Dorsolateral prefrontal cortex (tissue), 120 donors: ENCODE measurements at regions of chr15 and their contacts with region 1.

Region 1: GRCh38 chr15:43791993-43792760 is at the start of gene SERF2:
- DNase-seq: peak; percentile 100
- H3K4me3 ChIP-seq: peak within 1 kb of the TSS; percentile 63 to 100 (median 95)
- H3K27ac ChIP-seq: peak within 1 kb of the TSS; percentile 76 to 98 (median 92)
- H3K27me3 ChIP-seq: no peaks in the 10 kb centered on the region
- CTCF ChIP-seq: peak in 15 of 56 donors; percentile 0 to 41 (median 22)
- total RNA-seq, gene SERF2: 187 to 396 (median 280) TPM

Region 2: GRCh38 chr15:43241100-43241499 is 551.1 kb before region 1 on chr15:
- intact Hi-C with region 1: no loop called
- DNase-seq: no peak
- H3K4me3 ChIP-seq: no peak overlapping the region
- H3K27ac ChIP-seq: no peak overlapping the region
- H3K27me3 ChIP-seq: no peaks in the 10 kb centered on the region
- CTCF ChIP-seq: no peak

Region 3: GRCh38 chr15:43749690-43750345 is 42.4 kb before region 1 on chr15:
- intact Hi-C with region 1: loop called in 1 of 2 experiments (anchors 5 kb)
- DNase-seq: no peak
- H3K4me3 ChIP-seq: peak overlapping the region in 36 of 59 donors; percentile 3 to 49 (median 22)
- H3K27ac ChIP-seq: peak overlapping the region in 12 of 59 donors; percentile 2 to 49 (median 27)
- H3K27me3 ChIP-seq: no peaks in the 10 kb centered on the region
- CTCF ChIP-seq: no peak

Region 4: DNA sequence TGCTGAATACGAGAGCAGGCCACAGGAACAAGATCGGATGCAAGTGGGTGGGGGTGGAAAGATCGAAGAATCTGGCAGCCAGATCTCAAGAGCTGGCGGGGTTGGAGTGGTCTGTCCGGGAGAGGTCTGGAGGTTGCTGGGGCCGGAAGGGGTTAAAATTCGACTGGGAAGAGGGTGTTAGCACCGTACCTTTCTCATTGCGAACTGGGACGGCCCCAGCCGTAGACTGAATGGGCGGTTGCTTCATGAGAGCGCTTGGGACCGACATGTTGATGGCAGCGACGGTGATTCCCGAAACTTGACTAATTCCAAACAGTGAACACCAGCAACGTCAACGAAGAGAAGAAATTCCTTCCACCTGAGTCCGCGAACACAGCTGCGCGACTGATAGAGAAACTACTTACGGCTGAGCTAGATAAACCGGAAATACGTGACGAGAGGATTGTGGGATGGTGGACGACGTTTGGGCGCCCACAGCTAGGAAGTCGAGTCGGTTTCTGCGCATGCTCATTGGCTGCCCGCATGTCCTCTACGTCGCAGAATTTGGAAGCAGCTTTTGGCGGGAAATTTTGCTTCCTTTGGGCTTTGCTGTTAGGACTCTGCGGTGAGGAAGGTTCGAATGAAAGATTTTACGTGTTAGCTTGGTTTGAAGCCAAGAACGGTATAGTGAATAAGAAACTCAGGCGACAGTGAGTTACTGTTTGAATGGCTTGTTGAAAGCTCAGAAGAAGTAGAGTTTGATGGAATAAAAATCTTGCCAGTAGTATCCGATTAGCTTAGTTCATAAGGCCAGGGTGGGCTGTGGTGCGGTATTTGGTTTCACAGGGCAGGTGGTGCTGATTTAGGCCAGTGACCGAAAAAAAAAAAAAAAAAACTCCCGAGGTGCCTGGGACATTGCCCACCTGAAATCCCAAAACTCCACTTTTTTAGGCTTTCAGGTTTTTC is 32.4 kb after region 1 on chr15 and contains the start of gene MFAP1:
- intact Hi-C with region 1: loop called in 1 of 2 experiments (anchors 5 kb)
- DNase-seq: peak; percentile 88 to 97 (median 94)
- H3K4me3 ChIP-seq: peak within 1 kb of the TSS; percentile 63 to 99 (median 89)
- H3K27ac ChIP-seq: peak within 1 kb of the TSS in 58 of 59 donors; percentile 9 to 95 (median 83)
- H3K27me3 ChIP-seq: no peaks in the 10 kb centered on the region
- CTCF ChIP-seq: peak in 35 of 56 donors; percentile 10 to 58 (median 28)
- total RNA-seq, gene MFAP1: 15.9 to 30.4 (median 23.4) TPM

Region 5: DNA sequence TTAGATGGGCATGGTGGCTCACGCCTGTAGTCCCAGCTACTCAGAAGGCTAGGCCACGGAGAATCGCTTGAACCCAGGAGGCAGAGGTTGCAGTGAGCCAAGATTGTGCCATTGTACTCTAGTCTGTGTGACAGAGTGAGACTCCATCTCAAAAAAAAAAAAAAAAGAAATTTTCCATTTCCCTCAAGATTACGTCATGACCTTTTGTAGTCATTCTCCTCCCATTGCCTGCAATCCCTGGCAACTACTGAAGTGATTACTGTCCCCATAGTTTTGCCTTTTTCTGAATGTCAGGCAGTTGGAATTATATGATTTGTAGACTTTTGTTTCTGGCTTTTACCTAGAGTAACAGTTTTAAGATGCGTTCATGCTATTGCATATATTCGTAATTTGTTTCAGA is 62.6 kb after region 1 on chr15:
- intact Hi-C with region 1: no loop called
- DNase-seq: no peak
- H3K4me3 ChIP-seq: no peak overlapping the region
- H3K27ac ChIP-seq: no peak overlapping the region
- H3K27me3 ChIP-seq: no peaks in the 10 kb centered on the region
- CTCF ChIP-seq: no peak